HCT116 (cell line): ENCODE measurements at regions of chr1 and their contacts with region 1.

Region 1: GRCh38 chr1:7454052-7454815 is 316.9 kb upstream of the VAMP3 start:
- DNase-seq: no peak
- ATAC-seq: peak; percentile 95
- H3K4me3 ChIP-seq: no peak overlapping the region
- H3K27ac ChIP-seq: no peak overlapping the region
- H3K4me1 ChIP-seq: peaks cover 0 to 7% of the 10 kb centered on the region in 2 experiments; a peak in 2 of 4 replicates
- H3K27me3 ChIP-seq: no peaks in the 10 kb centered on the region
- CTCF ChIP-seq: peak; percentile 62 to 83 (median 68); a peak in 5 of 6 replicates
- POLR2A ChIP-seq: no peak
- RAD21 ChIP-seq: peak; percentile 81

Region 2: DNA sequence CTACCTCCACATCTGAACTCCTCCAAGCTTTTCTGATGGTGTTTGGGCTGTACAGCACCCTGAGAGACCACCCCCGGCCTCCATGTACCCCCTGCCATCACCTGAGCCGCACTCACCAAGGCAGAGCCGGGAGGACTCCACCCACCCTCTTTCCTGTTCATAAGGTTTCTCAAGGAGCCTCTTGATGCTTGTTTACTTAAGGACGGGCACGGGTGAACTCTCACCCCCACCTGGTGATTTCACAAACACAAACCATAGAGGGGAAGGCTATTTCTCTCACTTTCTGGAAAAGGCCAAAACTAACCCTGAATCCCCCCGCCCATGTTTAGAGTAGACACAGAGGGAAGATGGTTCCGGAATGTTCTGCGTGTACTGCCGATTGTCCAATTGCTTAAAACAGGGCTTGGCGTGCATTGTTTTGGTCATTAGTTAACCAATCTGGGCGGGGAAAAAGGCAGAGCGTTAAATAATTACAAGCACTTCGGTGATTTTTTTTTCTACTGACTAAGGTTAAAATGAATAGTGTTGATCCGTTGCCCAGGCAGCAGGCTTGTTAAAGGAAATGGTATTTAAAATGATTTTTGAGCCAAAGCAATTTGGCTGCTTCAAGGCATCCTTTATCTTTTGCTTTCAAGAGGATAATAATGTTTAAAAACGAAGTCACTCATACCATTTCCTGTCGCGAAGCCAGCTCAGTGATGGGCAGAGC is 37.0 kb after region 1 on chr1:
- CTCF ChIA-PET with region 1: no interaction called
- POLR2A ChIA-PET with region 1: no interaction called
- RAD21 ChIA-PET with region 1: no interaction called
- intact Hi-C with region 1: no loop called
- DNase-seq: no peak
- ATAC-seq: no peak
- H3K4me3 ChIP-seq: no peak overlapping the region
- H3K27ac ChIP-seq: no peak overlapping the region
- H3K4me1 ChIP-seq: peaks cover 0 to 8% of the 10 kb centered on the region in 2 experiments; a peak in 1 of 4 replicates
- H3K27me3 ChIP-seq: no peaks in the 10 kb centered on the region
- CTCF ChIP-seq: no peak
- POLR2A ChIP-seq: no peak
- RAD21 ChIP-seq: no peak

Region 3: GRCh38 chr1:7539769-7540175 is 85.5 kb after region 1 on chr1:
- CTCF ChIA-PET with region 1: interaction called, 8 read pairs
- POLR2A ChIA-PET with region 1: no interaction called
- RAD21 ChIA-PET with region 1: no interaction called
- intact Hi-C with region 1: loop called (anchors 2 kb)
- DNase-seq: peak; percentile 67
- ATAC-seq: peak; percentile 92
- H3K4me3 ChIP-seq: no peak overlapping the region
- H3K27ac ChIP-seq: no peak overlapping the region
- H3K4me1 ChIP-seq: peaks cover 0 to 20% of the 10 kb centered on the region in 2 experiments; a peak in 2 of 4 replicates
- H3K27me3 ChIP-seq: no peaks in the 10 kb centered on the region
- CTCF ChIP-seq: peak; percentile 71 to 87 (median 73); a peak in 5 of 6 replicates
- POLR2A ChIP-seq: no peak
- RAD21 ChIP-seq: peak; percentile 88